ENCODE measurements at regions of chr17 and their contacts with region 1.

Region 1: DNA sequence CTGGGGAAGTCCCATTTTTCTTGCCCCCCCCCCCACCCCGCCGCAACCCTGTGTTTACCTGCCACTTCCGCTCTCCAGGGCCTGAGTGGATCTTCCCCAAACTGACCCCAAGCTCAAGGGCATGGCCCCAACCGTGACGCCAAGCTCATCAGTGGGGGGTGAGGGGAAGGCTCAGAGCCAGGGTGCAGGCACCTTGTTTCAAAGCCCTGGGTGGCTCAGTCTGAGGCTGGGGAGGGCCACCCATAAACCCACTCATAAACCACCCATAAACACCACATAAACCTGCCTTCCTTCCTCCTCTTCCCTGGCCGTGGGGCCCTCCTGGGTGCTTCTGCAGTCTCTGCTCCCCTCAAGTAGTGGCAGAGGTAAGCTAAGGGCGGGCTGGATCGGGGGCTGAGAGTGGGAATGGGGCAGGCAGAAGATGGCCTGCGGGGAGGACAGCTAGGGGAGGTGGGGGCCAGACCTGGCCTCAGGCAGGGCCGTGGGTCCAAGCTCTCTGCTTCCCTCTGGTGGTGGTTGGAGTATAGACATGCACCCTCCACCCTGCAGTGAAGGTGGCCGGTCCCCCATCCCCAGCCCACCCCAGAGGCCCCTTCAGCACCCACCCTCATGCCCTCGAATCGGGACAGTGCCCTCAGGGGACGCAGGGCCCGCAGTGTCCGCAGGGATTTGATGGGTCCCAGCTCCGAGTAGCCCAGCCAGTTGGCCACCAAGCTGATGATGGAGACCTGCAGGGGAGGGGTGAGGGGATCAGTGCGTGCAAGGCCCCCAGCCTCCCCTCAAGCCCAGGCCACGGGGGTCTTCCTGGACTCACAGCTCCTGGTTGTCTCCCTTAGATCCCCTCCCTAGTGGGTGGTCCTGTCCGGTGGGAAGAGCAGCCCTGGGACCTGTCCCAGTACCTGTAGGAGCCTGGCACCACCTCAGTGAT is 14.6 kb upstream of the CD79B start:
- DNase-seq: peak in 2 of 3 donors; percentile 69 to 71
- ATAC-seq: peak; percentile 65 to 66
- H3K4me3 ChIP-seq: no peak overlapping the region
- H3K27ac ChIP-seq: no peak overlapping the region
- H3K4me1 ChIP-seq: no peaks in the 10 kb centered on the region
- H3K27me3 ChIP-seq: no peaks in the 10 kb centered on the region

Region 2: DNA sequence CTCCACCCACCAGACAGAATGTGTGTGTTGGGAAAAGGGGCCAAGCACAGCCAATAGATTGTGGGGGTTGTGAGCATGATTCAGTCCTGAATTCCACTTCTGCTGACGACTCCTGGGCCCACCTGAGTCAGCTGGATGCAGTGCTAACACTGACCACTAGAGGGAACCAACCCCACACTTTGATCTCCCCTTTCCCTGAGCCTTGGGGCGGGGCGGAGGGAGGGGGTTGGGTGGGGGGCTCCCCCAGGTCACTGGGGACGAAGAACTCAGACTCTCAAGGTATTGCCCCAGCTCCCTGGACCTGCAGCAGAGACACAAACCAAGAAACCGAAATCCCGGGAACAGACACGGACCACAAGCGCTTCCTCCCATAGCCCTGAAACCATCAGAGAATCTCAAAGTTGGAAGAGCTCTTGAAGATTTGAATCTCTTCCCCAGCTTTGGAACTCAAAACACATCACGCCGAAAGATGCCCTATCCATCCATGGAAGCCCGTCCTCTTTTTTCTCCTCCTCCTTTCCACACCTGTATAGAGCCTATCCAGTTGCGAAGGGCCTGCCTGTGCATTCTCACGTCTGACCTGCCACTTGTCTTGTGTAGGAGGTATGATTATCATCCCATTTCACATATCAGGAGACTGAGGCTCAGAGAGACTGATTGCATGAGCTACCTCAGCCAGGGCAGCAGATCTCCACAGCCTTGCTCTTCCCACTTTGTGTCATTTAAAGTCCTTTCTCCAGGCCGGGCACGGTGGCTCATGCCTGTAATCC is 34.9 kb before region 1 on chr17:
- intact Hi-C with region 1: loop called in 1 of 4 experiments (anchors 5 kb)
- DNase-seq: peak in 1 of 3 donors; percentile 47
- ATAC-seq: peak in 1 of 2 donors; percentile 66
- H3K4me3 ChIP-seq: no peak overlapping the region
- H3K27ac ChIP-seq: no peak overlapping the region
- H3K4me1 ChIP-seq: no peaks in the 10 kb centered on the region
- H3K27me3 ChIP-seq: no peaks in the 10 kb centered on the region

Region 3: GRCh38 chr17:63984651-63985386 is 38.1 kb after region 1 on chr17:
- intact Hi-C with region 1: loop called in 2 of 4 experiments (anchors 5 kb)
- DNase-seq: peak in 2 of 3 donors; percentile 60 to 63
- ATAC-seq: peak; percentile 53 to 70
- H3K4me3 ChIP-seq: no peak overlapping the region
- H3K27ac ChIP-seq: peak overlapping the region; percentile 0
- H3K4me1 ChIP-seq: peaks cover 8% of the 10 kb centered on the region
- H3K27me3 ChIP-seq: no peaks in the 10 kb centered on the region

Region 4: GRCh38 chr17:63998050-63998720 is 51.5 kb after region 1 on chr17 and contains the start of gene PRR29:
- intact Hi-C with region 1: loop called in 1 of 4 experiments (anchors 5 kb)
- DNase-seq: peak; percentile 85 to 92 (median 90)
- ATAC-seq: peak; percentile 59 to 62
- H3K4me3 ChIP-seq: peak within 1 kb of the TSS; percentile 46
- H3K27ac ChIP-seq: no peak within 1 kb of the TSS
- H3K4me1 ChIP-seq: peaks cover 5% of the 10 kb centered on the region
- H3K27me3 ChIP-seq: no peaks in the 10 kb centered on the region
- total RNA-seq, gene PRR29: 0.11 to 0.25 (median 0.15) TPM in 3 of 4 donors, not detected in the other